Cardiac septum (tissue), 1 donor: ENCODE measurements at regions of chr7 and their contacts with region 1.

Region 1: GRCh38 chr7:7761340-7761980 is 43.1 kb upstream of the RPA3 start:
- DNase-seq: no peak

Region 2: GRCh38 chr7:7529328-7529727 is 232.1 kb before region 1 on chr7:
- intact Hi-C with region 1: no loop called
- DNase-seq: no peak

Region 3: DNA sequence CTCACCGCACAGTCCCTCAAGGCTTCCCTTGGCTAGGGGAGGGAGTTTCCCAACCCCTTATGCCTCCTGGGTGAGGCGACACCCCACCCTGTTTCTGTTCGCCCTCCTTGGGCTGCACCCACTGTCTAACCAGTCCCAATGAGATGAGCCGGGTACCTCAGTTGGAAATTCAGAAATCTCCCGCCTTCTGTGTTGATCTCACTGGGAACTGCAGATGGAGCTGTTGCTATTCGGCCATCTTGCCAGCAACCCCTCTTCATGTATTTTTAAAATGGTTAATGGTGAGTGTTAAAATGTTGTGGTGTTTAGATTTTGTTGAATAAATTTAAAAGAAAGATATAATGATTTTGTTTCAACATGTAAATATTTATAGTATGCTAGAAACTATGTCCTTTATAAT is 98.9 kb before region 1 on chr7:
- intact Hi-C with region 1: no loop called
- DNase-seq: no peak

Region 4: GRCh38 chr7:7720193-7720592 is 41.3 kb before region 1 on chr7:
- intact Hi-C with region 1: no loop called
- DNase-seq: no peak

Region 5: GRCh38 chr7:8217200-8218068 is 456.0 kb after region 1 on chr7:
- intact Hi-C with region 1: loop called (anchors 10 kb)
- DNase-seq: no peak